MCF 10A (cell line): ENCODE measurements at regions of chr1 and their contacts with region 1.

Region 1: GRCh38 chr1:224329842-224330753 is at the start of gene NVL:
- DNase-seq: peak; percentile 98
- H3K4me3 Mint-ChIP-seq: peak within 1 kb of the TSS; percentile 86
- H3K27ac Mint-ChIP-seq: peak within 1 kb of the TSS; percentile 99
- H3K4me1 Mint-ChIP-seq: peaks cover 33% of the 10 kb centered on the region
- H3K27me3 Mint-ChIP-seq: no peaks in the 10 kb centered on the region
- CTCF ChIP-seq: no peak
- total RNA-seq, gene NVL: 69.8 and 81.5 TPM in 2 replicates

Region 2: GRCh38 chr1:223845810-223846682 is 484.1 kb before region 1 on chr1 and contains the start of gene TP53BP2:
- CTCF ChIA-PET with region 1: interaction called, 4 read pairs
- POLR2A ChIA-PET with region 1: interaction called, 10 read pairs
- intact Hi-C with region 1: no loop called
- DNase-seq: peak; percentile 95
- H3K4me3 Mint-ChIP-seq: peak within 1 kb of the TSS; percentile 87
- H3K27ac Mint-ChIP-seq: peak within 1 kb of the TSS; percentile 100
- H3K4me1 Mint-ChIP-seq: peaks cover 21% of the 10 kb centered on the region
- H3K27me3 Mint-ChIP-seq: no peaks in the 10 kb centered on the region
- CTCF ChIP-seq: peak; percentile 90
- total RNA-seq, gene TP53BP2: 62.4 and 64.0 TPM in 2 replicates

Region 3: GRCh38 chr1:224123136-224123535 is 207.0 kb before region 1 on chr1:
- CTCF ChIA-PET with region 1: interaction called, 80 read pairs
- POLR2A ChIA-PET with region 1: interaction called, 109 read pairs
- intact Hi-C with region 1: no loop called
- DNase-seq: no peak
- H3K4me3 Mint-ChIP-seq: no peak overlapping the region
- H3K27ac Mint-ChIP-seq: no peak overlapping the region
- H3K4me1 Mint-ChIP-seq: peaks cover 28% of the 10 kb centered on the region
- H3K27me3 Mint-ChIP-seq: no peaks in the 10 kb centered on the region
- CTCF ChIP-seq: no peak

Region 4: GRCh38 chr1:224182866-224183590 is 147.1 kb before region 1 on chr1 and contains the start of gene DEGS1:
- CTCF ChIA-PET with region 1: interaction called, 3 read pairs
- POLR2A ChIA-PET with region 1: interaction called, 36 read pairs
- intact Hi-C with region 1: loop called (anchors 1 kb)
- DNase-seq: peak; percentile 94
- H3K4me3 Mint-ChIP-seq: peak within 1 kb of the TSS; percentile 85
- H3K27ac Mint-ChIP-seq: peak within 1 kb of the TSS; percentile 91
- H3K4me1 Mint-ChIP-seq: peaks cover 30% of the 10 kb centered on the region
- H3K27me3 Mint-ChIP-seq: no peaks in the 10 kb centered on the region
- CTCF ChIP-seq: no peak
- total RNA-seq, gene DEGS1: 99.1 and 118 TPM in 2 replicates

Region 5: GRCh38 chr1:224317383-224318024 is 12.6 kb before region 1 on chr1:
- CTCF ChIA-PET with region 1: interaction called, 6 read pairs
- POLR2A ChIA-PET with region 1: interaction called, 18 read pairs
- intact Hi-C with region 1: no loop called
- DNase-seq: no peak
- H3K4me3 Mint-ChIP-seq: no peak overlapping the region
- H3K27ac Mint-ChIP-seq: no peak overlapping the region
- H3K4me1 Mint-ChIP-seq: no peaks in the 10 kb centered on the region
- H3K27me3 Mint-ChIP-seq: no peaks in the 10 kb centered on the region
- CTCF ChIP-seq: no peak

Region 6: DNA sequence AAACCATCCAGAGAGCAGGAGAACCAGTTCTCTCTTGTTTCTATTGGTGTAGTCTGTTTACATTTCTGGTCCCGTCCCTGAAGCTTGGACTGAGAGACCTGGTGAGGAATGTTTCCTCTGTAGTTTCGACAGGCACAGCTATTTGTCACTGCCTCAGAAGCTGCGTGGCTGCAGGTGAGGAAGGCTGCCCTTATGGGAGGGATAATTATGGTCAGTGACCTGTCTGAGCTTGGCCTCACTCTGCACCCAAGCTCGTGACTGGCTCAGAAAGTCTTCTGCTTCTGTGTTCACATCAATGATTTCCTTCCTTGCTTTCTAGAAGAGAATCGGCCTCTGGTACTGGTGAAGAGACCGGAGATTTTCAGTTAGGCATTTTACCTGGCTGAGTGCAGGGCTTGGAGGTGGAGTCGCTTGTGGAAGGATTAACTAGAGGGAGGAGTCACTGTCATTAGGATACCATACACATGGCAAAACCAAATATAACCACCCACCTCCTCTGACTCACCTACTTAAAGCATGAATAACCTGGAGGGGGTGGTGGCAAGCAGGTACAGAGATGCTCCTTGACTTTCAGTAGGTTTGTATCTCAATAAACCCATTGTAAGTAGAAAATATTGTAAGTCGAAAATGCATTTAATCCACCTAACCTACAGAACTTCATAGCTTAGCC is 124.4 kb after region 1 on chr1:
- CTCF ChIA-PET with region 1: interaction called, 8 read pairs
- POLR2A ChIA-PET with region 1: interaction called, 15 read pairs
- intact Hi-C with region 1: loop called (anchors 1 kb)
- DNase-seq: peak; percentile 95
- H3K4me3 Mint-ChIP-seq: peak overlapping the region; percentile 46
- H3K27ac Mint-ChIP-seq: peak overlapping the region; percentile 68
- H3K4me1 Mint-ChIP-seq: peaks cover 51% of the 10 kb centered on the region
- H3K27me3 Mint-ChIP-seq: no peaks in the 10 kb centered on the region
- CTCF ChIP-seq: no peak